A673 (cell line): ENCODE measurements at regions of chr4 and their contacts with region 1.

Region 1: DNA sequence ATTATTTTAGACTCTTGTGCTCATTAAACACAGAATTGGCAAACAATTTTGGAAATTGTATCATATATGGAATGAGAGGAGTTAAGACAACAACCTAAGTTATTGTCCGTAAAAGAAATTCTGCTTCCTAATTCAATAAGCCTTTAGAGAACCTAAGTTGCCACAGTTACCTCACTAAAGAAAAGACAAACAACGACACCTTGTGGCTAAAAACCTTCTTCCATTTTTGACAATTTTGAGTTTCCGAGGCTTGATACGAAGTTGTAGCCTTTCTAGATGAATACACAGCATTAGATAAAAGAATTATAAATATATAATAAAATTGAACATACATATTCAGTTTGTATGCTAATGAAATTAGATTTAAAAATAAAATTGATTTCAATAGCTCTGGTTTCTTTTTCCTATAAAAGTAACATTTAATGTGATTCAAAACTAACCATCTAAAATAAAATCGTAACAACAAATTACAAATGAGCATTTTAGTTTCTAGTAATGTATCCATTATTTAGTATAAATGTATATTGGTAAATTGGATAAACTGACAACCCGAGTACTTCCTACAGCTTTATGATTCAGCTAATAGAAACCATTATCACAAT is 275.1 kb downstream of the GPM6A start:
- DNase-seq: peak; percentile 71
- H3K4me3 ChIP-seq: no peak overlapping the region
- H3K27ac ChIP-seq: no peak overlapping the region
- H3K4me1 ChIP-seq: no peaks in the 10 kb centered on the region
- H3K27me3 ChIP-seq: no peaks in the 10 kb centered on the region
- CTCF ChIP-seq: peak; percentile 68

Region 2: GRCh38 chr4:174503079-174503715 is 1033.8 kb before region 1 on chr4:
- CTCF ChIA-PET with region 1: no interaction called
- POLR2A ChIA-PET with region 1: interaction called, 12 read pairs
- intact Hi-C with region 1: no loop called
- DNase-seq: no peak
- H3K4me3 ChIP-seq: no peak overlapping the region
- H3K27ac ChIP-seq: no peak overlapping the region
- H3K4me1 ChIP-seq: no peaks in the 10 kb centered on the region
- H3K27me3 ChIP-seq: no peaks in the 10 kb centered on the region
- CTCF ChIP-seq: no peak

Region 3: GRCh38 chr4:174764105-174764729 is 772.7 kb before region 1 on chr4:
- CTCF ChIA-PET with region 1: interaction called, 3 read pairs
- POLR2A ChIA-PET with region 1: no interaction called
- intact Hi-C with region 1: loop called (anchors 5 kb)
- DNase-seq: peak; percentile 61
- H3K4me3 ChIP-seq: no peak overlapping the region
- H3K27ac ChIP-seq: no peak overlapping the region
- H3K4me1 ChIP-seq: no peaks in the 10 kb centered on the region
- H3K27me3 ChIP-seq: no peaks in the 10 kb centered on the region
- CTCF ChIP-seq: peak; percentile 82

Region 4: DNA sequence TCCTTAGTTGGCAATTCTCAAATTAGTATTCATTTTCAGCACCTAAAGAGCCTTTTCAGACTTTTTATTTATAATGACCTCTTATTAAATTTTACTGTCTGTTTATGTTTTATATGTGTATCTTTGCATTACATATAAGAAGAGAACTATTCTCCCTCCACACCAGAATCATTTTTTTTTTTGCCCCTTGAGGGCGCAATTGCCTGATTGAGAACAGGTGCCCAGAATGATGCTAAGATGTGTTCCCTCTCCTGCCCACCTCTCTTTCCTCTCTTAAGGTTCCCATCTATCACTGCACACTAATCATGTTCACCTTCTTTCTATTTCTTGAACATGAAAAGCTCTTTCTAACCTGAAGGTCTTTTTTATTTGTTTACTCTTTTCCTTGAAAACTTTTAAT is 663.0 kb before region 1 on chr4:
- CTCF ChIA-PET with region 1: no interaction called
- POLR2A ChIA-PET with region 1: no interaction called
- intact Hi-C with region 1: loop called (anchors 5 kb)
- DNase-seq: peak; percentile 11
- H3K4me3 ChIP-seq: no peak overlapping the region
- H3K27ac ChIP-seq: no peak overlapping the region
- H3K4me1 ChIP-seq: no peaks in the 10 kb centered on the region
- H3K27me3 ChIP-seq: no peaks in the 10 kb centered on the region
- CTCF ChIP-seq: peak; percentile 49

Region 5: GRCh38 chr4:175590205-175590604 is 53.3 kb after region 1 on chr4:
- CTCF ChIA-PET with region 1: no interaction called
- POLR2A ChIA-PET with region 1: no interaction called
- intact Hi-C with region 1: no loop called
- DNase-seq: no peak
- H3K4me3 ChIP-seq: no peak overlapping the region
- H3K27ac ChIP-seq: no peak overlapping the region
- H3K4me1 ChIP-seq: no peaks in the 10 kb centered on the region
- H3K27me3 ChIP-seq: no peaks in the 10 kb centered on the region
- CTCF ChIP-seq: no peak

Region 6: GRCh38 chr4:175745329-175745728 is 208.4 kb after region 1 on chr4:
- CTCF ChIA-PET with region 1: no interaction called
- POLR2A ChIA-PET with region 1: no interaction called
- intact Hi-C with region 1: no loop called
- DNase-seq: no peak
- H3K4me3 ChIP-seq: no peak overlapping the region
- H3K27ac ChIP-seq: no peak overlapping the region
- H3K4me1 ChIP-seq: no peaks in the 10 kb centered on the region
- H3K27me3 ChIP-seq: no peaks in the 10 kb centered on the region
- CTCF ChIP-seq: no peak

Region 7: GRCh38 chr4:175784986-175785525 is 248.1 kb after region 1 on chr4:
- CTCF ChIA-PET with region 1: no interaction called
- POLR2A ChIA-PET with region 1: no interaction called
- intact Hi-C with region 1: no loop called
- DNase-seq: no peak
- H3K4me3 ChIP-seq: no peak overlapping the region
- H3K27ac ChIP-seq: no peak overlapping the region
- H3K4me1 ChIP-seq: no peaks in the 10 kb centered on the region
- H3K27me3 ChIP-seq: no peaks in the 10 kb centered on the region
- CTCF ChIP-seq: no peak

Region 8: GRCh38 chr4:176052744-176053143 is 515.8 kb after region 1 on chr4:
- CTCF ChIA-PET with region 1: no interaction called
- POLR2A ChIA-PET with region 1: no interaction called
- intact Hi-C with region 1: no loop called
- DNase-seq: no peak
- H3K4me3 ChIP-seq: no peak overlapping the region
- H3K27ac ChIP-seq: no peak overlapping the region
- H3K4me1 ChIP-seq: no peaks in the 10 kb centered on the region
- H3K27me3 ChIP-seq: no peaks in the 10 kb centered on the region
- CTCF ChIP-seq: no peak